ENCODE measurements at regions of chr10 and their contacts with region 1.

Region 1: GRCh38 chr10:24097751-24098207 is 111.2 kb upstream of the KIAA1217 start:
- DNase-seq: peak; percentile 83
- H3K4me3 ChIP-seq: no peak overlapping the region
- H3K27ac ChIP-seq: peak overlapping the region; percentile 60
- H3K4me1 ChIP-seq: peaks cover 15% of the 10 kb centered on the region
- H3K27me3 ChIP-seq: no peaks in the 10 kb centered on the region
- CTCF ChIP-seq: no peak

Region 2: GRCh38 chr10:24086296-24087086 is 11.3 kb before region 1 on chr10:
- CTCF ChIA-PET with region 1: interaction called, 11 read pairs
- POLR2A ChIA-PET with region 1: no interaction called
- intact Hi-C with region 1: no loop called
- DNase-seq: no peak
- H3K4me3 ChIP-seq: no peak overlapping the region
- H3K27ac ChIP-seq: no peak overlapping the region
- H3K4me1 ChIP-seq: no peaks in the 10 kb centered on the region
- H3K27me3 ChIP-seq: no peaks in the 10 kb centered on the region
- CTCF ChIP-seq: no peak

Region 3: DNA sequence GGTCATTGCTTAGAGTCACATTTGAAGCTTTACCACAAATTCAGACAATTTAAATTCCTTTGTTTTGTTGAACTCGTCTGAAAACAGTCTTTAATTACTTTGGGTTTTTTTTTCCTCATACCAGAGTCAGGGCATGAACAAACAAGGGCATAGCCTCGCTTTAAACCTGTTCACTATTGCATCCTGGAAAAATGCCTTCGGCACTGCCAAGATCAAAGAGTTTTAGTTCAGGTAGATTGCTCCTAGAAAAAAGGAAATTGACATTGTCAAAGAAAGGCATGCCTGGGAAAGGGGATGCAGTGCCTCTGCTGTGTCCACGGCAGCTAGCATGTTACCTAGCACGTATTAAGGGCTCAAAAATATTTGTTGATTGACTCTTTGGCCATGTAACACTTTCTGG is 390.9 kb after region 1 on chr10:
- CTCF ChIA-PET with region 1: no interaction called
- POLR2A ChIA-PET with region 1: no interaction called
- intact Hi-C with region 1: no loop called
- DNase-seq: no peak
- H3K4me3 ChIP-seq: no peak overlapping the region
- H3K27ac ChIP-seq: no peak overlapping the region
- H3K4me1 ChIP-seq: peaks cover 19% of the 10 kb centered on the region
- H3K27me3 ChIP-seq: no peaks in the 10 kb centered on the region
- CTCF ChIP-seq: no peak